Activated naive CD4-positive, alpha-beta T cell treated with anti-CD3 and anti-CD28 coated beads for 36 hours (primary cell): ENCODE measurements at regions of chr16 and their contacts with region 1.

Region 1: GRCh38 chr16:30571695-30572600 is at the start of gene ZNF688:
- DNase-seq: peak; percentile 94
- H3K4me3 Mint-ChIP-seq: peak within 1 kb of the TSS; percentile 89
- H3K27ac Mint-ChIP-seq: peak within 1 kb of the TSS; percentile 94
- H3K4me1 Mint-ChIP-seq: peaks cover 56% of the 10 kb centered on the region
- H3K27me3 Mint-ChIP-seq: no peaks in the 10 kb centered on the region
- total RNA-seq, gene ZNF688: 3.7 to 3.9 TPM

Region 2: GRCh38 chr16:30551781-30552180 is 20.2 kb before region 1 on chr16:
- CTCF ChIA-PET with region 1: interaction called, 5 read pairs
- intact Hi-C with region 1: loop called (anchors 1 kb)
- DNase-seq: peak; percentile 74
- H3K4me3 Mint-ChIP-seq: peak overlapping the region; percentile 21
- H3K27ac Mint-ChIP-seq: peak overlapping the region; percentile 94
- H3K4me1 Mint-ChIP-seq: peaks cover 57% of the 10 kb centered on the region
- H3K27me3 Mint-ChIP-seq: no peaks in the 10 kb centered on the region

Region 3: DNA sequence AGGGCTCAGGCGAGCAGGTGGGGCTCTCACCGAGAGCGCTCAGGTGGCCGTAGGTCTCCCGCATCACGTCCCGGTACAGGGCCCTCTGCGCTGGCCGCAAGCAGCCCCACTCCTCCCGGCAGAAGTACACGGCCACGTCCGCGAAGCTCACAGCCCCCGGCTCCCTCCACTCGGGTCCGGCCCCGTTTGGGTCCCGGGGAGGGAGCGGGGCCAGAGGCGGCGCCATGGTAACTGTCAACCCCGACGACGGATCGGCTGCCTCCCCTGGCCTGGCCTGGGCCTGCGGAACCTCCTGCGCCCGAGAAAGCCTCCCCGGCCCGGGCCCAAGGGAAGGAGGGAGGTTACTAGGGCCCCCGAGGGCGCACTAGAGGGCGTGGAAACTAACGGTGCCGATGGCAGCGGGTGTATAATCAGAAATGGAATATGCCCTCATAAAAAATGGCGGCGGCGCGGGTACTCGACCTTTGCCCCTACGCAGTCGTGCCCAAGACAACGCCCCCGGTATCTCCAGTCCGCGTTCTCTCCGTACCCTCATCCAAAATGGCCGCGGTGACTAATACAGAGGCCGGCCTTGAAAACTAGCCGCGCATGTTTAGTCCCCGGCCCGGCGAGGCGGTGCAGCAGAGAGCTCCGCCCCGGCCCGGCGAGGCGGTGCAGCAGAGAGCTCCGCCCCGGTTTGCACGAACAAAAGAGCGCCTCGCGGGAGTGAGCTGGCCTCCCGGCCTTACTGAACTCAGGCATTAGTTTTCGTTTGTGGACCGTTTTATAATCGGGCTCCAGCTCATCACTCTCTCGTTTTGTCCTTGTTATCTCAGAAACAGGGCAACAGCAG is 13.8 kb before region 1 on chr16 and contains the start of gene ZNF764:
- CTCF ChIA-PET with region 1: interaction called, 5 read pairs
- intact Hi-C with region 1: loop called (anchors 1 kb)
- DNase-seq: peak; percentile 99
- H3K4me3 Mint-ChIP-seq: peak within 1 kb of the TSS; percentile 84
- H3K27ac Mint-ChIP-seq: peak within 1 kb of the TSS; percentile 90
- H3K4me1 Mint-ChIP-seq: peaks cover 34% of the 10 kb centered on the region
- H3K27me3 Mint-ChIP-seq: no peaks in the 10 kb centered on the region
- total RNA-seq, gene ZNF764: 7.6 to 9.5 TPM

Region 4: DNA sequence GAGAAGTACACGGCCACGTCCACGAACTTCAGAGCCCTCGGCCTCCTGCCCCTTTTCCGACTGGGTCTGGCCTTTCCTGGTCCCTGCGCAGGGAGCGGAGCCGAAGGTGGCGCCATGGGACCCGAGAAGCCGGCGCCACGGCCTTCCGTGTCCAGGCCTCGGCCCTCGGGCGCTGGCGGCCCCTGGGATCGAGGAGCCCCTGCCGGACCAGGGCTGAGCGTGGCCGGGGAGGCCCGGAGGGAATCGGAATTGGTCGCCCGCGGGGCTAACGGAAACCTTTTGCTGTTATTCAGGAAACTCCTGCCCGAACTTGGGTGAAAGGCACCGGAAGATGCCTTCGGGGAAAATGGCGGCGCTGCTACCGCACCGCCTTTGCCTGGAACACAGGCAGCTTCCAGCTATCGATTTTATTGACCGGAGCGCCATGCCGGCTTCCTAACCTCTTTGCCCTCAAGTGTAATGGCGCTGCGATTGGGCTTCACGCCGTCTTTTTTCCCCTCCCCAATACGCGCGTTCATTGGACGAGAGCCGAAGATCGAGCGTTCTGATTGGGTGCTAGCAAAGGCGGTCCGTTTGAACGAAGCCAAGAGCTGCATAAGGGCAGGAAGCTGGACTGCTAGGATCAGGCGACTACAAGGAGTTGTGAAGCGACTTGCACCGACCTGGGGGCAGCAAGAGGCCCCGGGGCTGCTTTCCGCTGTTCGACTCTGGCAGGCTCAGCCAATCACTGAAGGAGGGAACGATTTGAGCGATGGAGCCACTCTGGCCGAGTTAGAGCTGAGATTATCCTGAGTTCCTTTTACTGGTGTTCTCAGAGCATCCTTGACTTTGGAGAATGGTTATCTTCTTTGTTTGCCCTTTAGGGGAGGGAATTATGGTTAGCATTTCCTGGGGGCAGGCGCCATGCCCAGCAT is 38.2 kb after region 1 on chr16 and contains the start of gene ZNF689:
- CTCF ChIA-PET with region 1: interaction called, 4 read pairs
- intact Hi-C with region 1: loop called (anchors 1 kb)
- DNase-seq: peak; percentile 98
- H3K4me3 Mint-ChIP-seq: peak within 1 kb of the TSS; percentile 83
- H3K27ac Mint-ChIP-seq: peak within 1 kb of the TSS; percentile 96
- H3K4me1 Mint-ChIP-seq: peaks cover 20% of the 10 kb centered on the region
- H3K27me3 Mint-ChIP-seq: no peaks in the 10 kb centered on the region
- total RNA-seq, gene ZNF689: 10.7 to 11.5 TPM

Region 5: DNA sequence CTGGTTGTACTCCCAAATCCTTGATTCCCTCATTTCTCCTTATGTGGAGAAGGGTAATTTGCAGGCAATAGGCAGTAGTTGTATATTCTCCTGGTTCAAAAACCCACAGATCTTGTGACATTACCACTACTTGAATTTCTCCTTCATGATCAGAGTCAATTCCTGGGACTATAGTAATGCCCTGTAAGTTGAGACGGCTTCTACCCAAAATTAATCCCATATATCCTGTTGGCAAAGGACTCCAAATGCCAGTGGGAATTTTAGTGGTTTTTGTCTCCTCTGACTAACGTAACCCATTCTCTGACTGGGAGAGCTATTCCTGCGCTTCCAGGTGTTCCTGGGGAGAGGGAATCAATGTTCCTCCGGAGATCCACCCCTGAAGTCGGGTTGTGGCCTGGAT is 49.8 kb after region 1 on chr16:
- CTCF ChIA-PET with region 1: no interaction called
- intact Hi-C with region 1: no loop called
- DNase-seq: no peak
- H3K4me3 Mint-ChIP-seq: no peak overlapping the region
- H3K27ac Mint-ChIP-seq: no peak overlapping the region
- H3K4me1 Mint-ChIP-seq: no peaks in the 10 kb centered on the region
- H3K27me3 Mint-ChIP-seq: no peaks in the 10 kb centered on the region

Region 6: GRCh38 chr16:30747799-30748634 is 176.1 kb after region 1 on chr16 and contains the start of gene PHKG2:
- CTCF ChIA-PET with region 1: no interaction called
- intact Hi-C with region 1: no loop called
- DNase-seq: peak; percentile 99
- H3K4me3 Mint-ChIP-seq: peak within 1 kb of the TSS; percentile 89
- H3K27ac Mint-ChIP-seq: peak within 1 kb of the TSS; percentile 86
- H3K4me1 Mint-ChIP-seq: peaks cover 19% of the 10 kb centered on the region
- H3K27me3 Mint-ChIP-seq: no peaks in the 10 kb centered on the region
- total RNA-seq, gene PHKG2: 23.3 to 26.4 TPM